ENCODE measurements at regions of chr2 and their contacts with region 1.

Region 1: GRCh38 chr2:133200684-133201421 is 367.4 kb downstream of the NCKAP5 start:
- DNase-seq: no peak
- CTCF ChIP-seq: no peak

Region 2: DNA sequence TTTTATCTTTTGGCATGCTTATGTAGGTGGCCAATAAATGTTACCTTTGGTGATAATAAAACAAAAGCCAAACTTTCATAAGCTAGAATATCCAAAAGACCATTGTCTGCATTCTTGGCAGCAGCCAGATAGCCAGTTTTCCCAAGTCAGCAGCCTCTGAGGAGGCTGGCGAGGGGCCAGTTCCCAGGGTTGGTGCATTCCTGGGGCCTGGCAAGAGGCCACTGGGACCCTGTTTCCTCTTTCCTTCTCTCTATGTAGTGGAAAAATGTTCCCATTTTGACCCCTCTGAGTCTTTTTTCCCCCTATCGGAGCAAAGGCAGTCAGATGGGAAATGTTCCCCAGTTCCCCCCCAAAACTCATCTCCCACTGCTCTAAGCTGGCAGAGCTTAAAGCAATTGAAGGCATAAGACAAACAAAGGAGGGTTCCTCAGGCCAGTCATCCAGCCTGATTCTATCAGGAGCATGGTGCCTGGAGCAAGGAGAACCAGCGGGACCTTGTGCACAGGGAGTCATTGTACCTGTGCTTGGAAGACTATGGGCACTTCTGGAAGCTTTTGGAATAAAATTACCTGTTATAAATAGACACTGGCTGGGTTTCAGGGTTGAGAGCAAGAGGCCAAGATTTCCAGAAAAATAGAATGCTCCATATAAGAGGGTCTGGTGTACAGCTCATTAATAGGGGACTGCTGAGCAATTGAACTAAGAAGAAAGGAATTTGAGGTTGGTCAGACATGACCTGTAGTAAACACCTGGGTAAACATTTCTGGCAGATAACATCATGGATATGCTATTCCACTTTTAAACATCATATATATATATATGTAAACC is 303.9 kb after region 1 on chr2:
- CTCF ChIA-PET with region 1: no interaction called
- POLR2A ChIA-PET with region 1: interaction called, 10 read pairs
- DNase-seq: no peak
- CTCF ChIP-seq: no peak

Measured in GM10248 (cell line).